ENCODE measurements at regions of chr6 and their contacts with region 1.

Region 1: DNA sequence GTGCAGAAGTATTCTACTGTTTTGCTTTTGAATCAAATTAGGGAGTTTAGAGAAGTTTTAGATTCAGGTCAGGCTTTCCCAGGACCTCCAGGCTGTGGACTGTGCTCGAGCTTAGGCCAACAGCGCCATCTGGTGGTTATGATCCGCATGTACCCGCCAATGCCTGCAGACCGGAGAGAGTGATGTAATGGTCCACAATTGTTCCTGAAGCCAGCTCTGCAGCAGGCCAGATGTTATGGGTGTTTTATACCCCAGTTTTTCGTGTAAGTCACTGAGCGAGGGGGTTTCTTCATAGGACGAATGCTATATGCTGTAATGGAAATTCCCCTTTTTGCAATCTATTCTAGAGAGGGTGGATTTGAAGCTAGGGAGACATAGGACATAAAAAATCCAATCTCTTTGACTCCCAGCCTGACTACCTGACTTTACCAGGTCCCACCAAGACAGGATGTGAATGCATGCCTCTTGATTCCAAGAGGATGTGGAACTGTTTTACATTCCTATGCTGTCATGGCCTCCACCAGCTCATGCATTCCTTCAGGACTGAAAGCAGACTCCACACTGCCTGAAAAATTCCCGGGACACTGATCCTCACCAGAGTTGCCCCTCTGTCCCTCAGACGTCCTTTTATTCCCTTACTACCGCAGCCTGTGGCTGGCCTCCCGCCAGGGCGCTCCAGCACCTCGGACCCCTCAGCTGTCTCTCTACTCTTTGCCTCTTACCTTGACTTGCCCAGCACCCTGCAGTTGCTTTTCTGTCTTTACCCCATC is 41.2 kb upstream of the LY86 start:
- DNase-seq: peak; percentile 81 to 88 (median 87)
- ATAC-seq: peak; percentile 97 to 99 (median 98)
- H3K4me3 ChIP-seq: peak overlapping the region; percentile 30 to 47 (median 36)
- H3K27ac ChIP-seq: no peak overlapping the region
- H3K4me1 ChIP-seq: peaks cover 0 to 11% (median 0%) of the 10 kb centered on the region in 4 donors
- H3K27me3 ChIP-seq: peaks cover 0 to 25% of the 10 kb centered on the region in 2 donors
- CTCF ChIP-seq: peak; percentile 91 to 96 (median 96)
- POLR2A ChIP-seq: no peak

Region 2: GRCh38 chr6:6057424-6058053 is 489.8 kb before region 1 on chr6:
- intact Hi-C with region 1: loop called in 1 of 2 experiments (anchors 10 kb)
- DNase-seq: no peak
- ATAC-seq: peak; percentile 80 to 87 (median 82)
- H3K4me3 ChIP-seq: no peak overlapping the region
- H3K27ac ChIP-seq: no peak overlapping the region
- H3K4me1 ChIP-seq: no peaks in the 10 kb centered on the region
- H3K27me3 ChIP-seq: no peaks in the 10 kb centered on the region
- CTCF ChIP-seq: peak; percentile 60 to 73 (median 70)
- POLR2A ChIP-seq: no peak

Measured in right lobe of liver (tissue), 6 donors.